T-cell (primary cell): ENCODE measurements at regions of chr4 and their contacts with region 1.

Region 1: GRCh38 chr4:185071236-185071811 is 53.0 kb downstream of the HELT start:
- DNase-seq: no peak
- ATAC-seq: no peak
- H3K4me3 ChIP-seq: no peak overlapping the region
- H3K4me3 Mint-ChIP-seq: no peak overlapping the region
- H3K27ac ChIP-seq: no peak overlapping the region
- H3K27ac Mint-ChIP-seq: no peak overlapping the region
- H3K4me1 ChIP-seq: no peaks in the 10 kb centered on the region
- H3K4me1 Mint-ChIP-seq: no peaks in the 10 kb centered on the region
- H3K27me3 ChIP-seq: peaks cover 0 to 12% of the 10 kb centered on the region in 2 experiments
- H3K27me3 Mint-ChIP-seq: peaks cover 16 to 27% of the 10 kb centered on the region in 2 donors

Region 2: GRCh38 chr4:185039508-185040273 is 31.6 kb before region 1 on chr4:
- CTCF ChIA-PET with region 1: no interaction called
- POLR2A ChIA-PET with region 1: no interaction called
- DNase-seq: peak in 30 of 35 experiments; percentile 7 to 72 (median 28)
- ATAC-seq: peak; percentile 70 to 83 (median 74)
- H3K4me3 ChIP-seq: no peak overlapping the region
- H3K4me3 Mint-ChIP-seq: no peak overlapping the region
- H3K27ac ChIP-seq: no peak overlapping the region
- H3K27ac Mint-ChIP-seq: no peak overlapping the region
- H3K4me1 ChIP-seq: peaks cover 0 to 3% of the 10 kb centered on the region in 2 experiments
- H3K4me1 Mint-ChIP-seq: peaks cover 4 to 8% (median 4%) of the 10 kb centered on the region in 3 donors
- H3K27me3 ChIP-seq: peaks cover 0 to 5% of the 10 kb centered on the region in 2 experiments
- H3K27me3 Mint-ChIP-seq: peaks cover 10 to 40% of the 10 kb centered on the region in 2 donors

Region 3: DNA sequence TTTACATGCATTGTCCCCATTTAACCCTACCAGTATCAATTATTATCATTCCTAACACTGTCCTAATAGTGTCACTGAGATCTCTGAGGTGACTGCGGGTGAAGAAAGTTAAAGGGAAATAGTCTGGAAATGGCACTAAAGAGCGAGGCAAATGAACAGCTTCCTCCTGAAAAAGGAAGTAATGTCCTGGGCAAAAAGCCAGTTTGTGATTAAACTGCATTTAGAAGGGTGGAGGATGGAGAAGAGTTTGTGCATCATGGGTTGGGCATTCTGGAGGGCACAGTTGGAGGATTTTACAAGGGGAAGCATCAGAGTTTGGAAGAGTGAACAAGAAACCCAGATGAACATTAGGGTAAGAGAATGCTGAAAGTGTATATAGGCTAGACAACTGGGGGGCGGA is 11.2 kb after region 1 on chr4:
- CTCF ChIA-PET with region 1: no interaction called
- POLR2A ChIA-PET with region 1: no interaction called
- DNase-seq: no peak
- ATAC-seq: no peak
- H3K4me3 ChIP-seq: no peak overlapping the region
- H3K4me3 Mint-ChIP-seq: no peak overlapping the region
- H3K27ac ChIP-seq: no peak overlapping the region
- H3K27ac Mint-ChIP-seq: no peak overlapping the region
- H3K4me1 ChIP-seq: no peaks in the 10 kb centered on the region
- H3K4me1 Mint-ChIP-seq: peaks cover 0 to 2% (median 0%) of the 10 kb centered on the region in 3 donors
- H3K27me3 ChIP-seq: peaks cover 0 to 6% of the 10 kb centered on the region in 2 experiments
- H3K27me3 Mint-ChIP-seq: peaks cover 8 to 24% of the 10 kb centered on the region in 2 donors

Region 4: GRCh38 chr4:185160380-185160779 is 89.1 kb after region 1 on chr4:
- CTCF ChIA-PET with region 1: interaction called in 1 of 2 experiments, 13 read pairs
- POLR2A ChIA-PET with region 1: no interaction called
- DNase-seq: no peak
- ATAC-seq: no peak
- H3K4me3 ChIP-seq: no peak overlapping the region
- H3K4me3 Mint-ChIP-seq: no peak overlapping the region
- H3K27ac ChIP-seq: no peak overlapping the region
- H3K27ac Mint-ChIP-seq: no peak overlapping the region
- H3K4me1 ChIP-seq: peaks cover 0 to 2% of the 10 kb centered on the region in 2 experiments
- H3K4me1 Mint-ChIP-seq: peaks cover 2 to 7% (median 6%) of the 10 kb centered on the region in 3 donors
- H3K27me3 ChIP-seq: no peaks in the 10 kb centered on the region
- H3K27me3 Mint-ChIP-seq: peaks cover 0 to 1% of the 10 kb centered on the region in 2 donors

Region 5: DNA sequence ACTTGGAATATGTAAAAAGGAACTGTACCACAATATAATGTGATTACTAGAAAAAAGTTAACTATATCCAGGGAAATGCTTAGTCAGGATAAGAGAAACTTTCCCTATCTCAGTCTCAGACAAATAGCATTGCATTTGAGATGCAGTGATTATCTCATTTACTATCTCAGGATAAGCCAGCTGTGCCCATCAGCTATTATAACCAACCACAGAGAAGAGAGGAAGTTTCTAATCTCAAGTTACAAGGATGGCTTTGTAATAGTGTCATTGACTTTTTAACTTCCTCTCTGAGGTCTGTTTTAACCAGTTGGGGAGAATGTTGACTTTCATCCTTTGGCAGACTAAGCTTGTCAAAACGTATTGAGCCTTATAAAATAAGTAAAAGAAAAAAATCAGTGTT is 194.6 kb after region 1 on chr4:
- CTCF ChIA-PET with region 1: no interaction called
- POLR2A ChIA-PET with region 1: no interaction called
- DNase-seq: peak in 1 of 35 experiments; percentile 28
- ATAC-seq: peak in 3 of 4 experiments; percentile 43 to 89 (median 54)
- H3K4me3 ChIP-seq: no peak overlapping the region
- H3K4me3 Mint-ChIP-seq: no peak overlapping the region
- H3K27ac ChIP-seq: no peak overlapping the region
- H3K27ac Mint-ChIP-seq: no peak overlapping the region
- H3K4me1 ChIP-seq: peaks cover 0 to 4% of the 10 kb centered on the region in 2 experiments
- H3K4me1 Mint-ChIP-seq: peaks cover 15 to 36% (median 25%) of the 10 kb centered on the region in 3 donors
- H3K27me3 ChIP-seq: no peaks in the 10 kb centered on the region
- H3K27me3 Mint-ChIP-seq: no peaks in the 10 kb centered on the region